ENCODE measurements at regions of chr3 and their contacts with region 1.

Region 1: GRCh38 chr3:141875374-141875892 is 1.0 kb upstream of the ATP1B3 start:
- DNase-seq: peak; percentile 87 to 89
- ATAC-seq: peak; percentile 83 to 97 (median 94)
- H3K4me3 ChIP-seq: peak overlapping the region; percentile 68 to 98 (median 94)
- H3K27ac ChIP-seq: peak overlapping the region; percentile 90 to 100 (median 99)
- H3K4me1 ChIP-seq: peaks cover 0 to 40% (median 21%) of the 10 kb centered on the region in 9 donors
- H3K27me3 ChIP-seq: no peaks in the 10 kb centered on the region
- CTCF ChIP-seq: peak; percentile 66 to 97 (median 90)

Region 2: GRCh38 chr3:141575879-141576743 is 299.3 kb before region 1 on chr3:
- intact Hi-C with region 1: loop called in 2 of 10 experiments (anchors 10 kb)
- DNase-seq: no peak
- ATAC-seq: peak in 4 of 8 donors; percentile 57 to 64 (median 60)
- H3K4me3 ChIP-seq: no peak overlapping the region
- H3K27ac ChIP-seq: peak overlapping the region in 1 of 10 donors; percentile 10
- H3K4me1 ChIP-seq: peaks cover 0 to 6% (median 0%) of the 10 kb centered on the region in 9 donors
- H3K27me3 ChIP-seq: no peaks in the 10 kb centered on the region
- CTCF ChIP-seq: peak in 8 of 9 donors; percentile 23 to 73 (median 60)

Region 3: GRCh38 chr3:141719911-141720310 is 155.5 kb before region 1 on chr3:
- intact Hi-C with region 1: no loop called
- DNase-seq: no peak
- ATAC-seq: no peak
- H3K4me3 ChIP-seq: no peak overlapping the region
- H3K27ac ChIP-seq: no peak overlapping the region
- H3K4me1 ChIP-seq: peaks cover 0 to 6% (median 0%) of the 10 kb centered on the region in 9 donors
- H3K27me3 ChIP-seq: no peaks in the 10 kb centered on the region
- CTCF ChIP-seq: no peak

Region 4: DNA sequence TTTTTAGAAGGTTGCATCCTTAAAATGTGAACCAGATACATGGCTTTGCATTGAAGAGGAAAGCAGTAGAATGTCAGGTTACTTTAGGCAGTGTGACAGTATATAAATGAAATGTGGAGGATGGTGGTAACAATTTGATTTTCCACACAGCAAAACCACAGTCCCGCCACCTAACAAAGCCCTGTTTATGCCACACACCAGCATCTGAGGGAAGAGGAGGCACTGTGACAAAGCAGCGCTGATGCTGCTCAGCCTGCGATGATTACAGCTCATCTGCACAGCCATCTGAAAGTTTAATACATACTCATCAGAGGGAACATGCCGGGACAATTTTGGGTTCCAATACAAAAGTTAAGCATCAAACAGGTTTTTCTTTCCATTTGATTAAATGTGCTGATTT is 128.5 kb before region 1 on chr3:
- intact Hi-C with region 1: loop called in 2 of 10 experiments (anchors 10 kb)
- DNase-seq: no peak
- ATAC-seq: no peak
- H3K4me3 ChIP-seq: no peak overlapping the region
- H3K27ac ChIP-seq: no peak overlapping the region
- H3K4me1 ChIP-seq: peaks cover 0 to 28% (median 22%) of the 10 kb centered on the region in 9 donors
- H3K27me3 ChIP-seq: no peaks in the 10 kb centered on the region
- CTCF ChIP-seq: no peak

Region 5: GRCh38 chr3:141796081-141796888 is 79.1 kb before region 1 on chr3:
- intact Hi-C with region 1: loop called in 5 of 10 experiments (anchors 2 to 10 kb)
- DNase-seq: peak in 1 of 2 donors; percentile 34
- ATAC-seq: peak in 6 of 8 donors; percentile 2 to 72 (median 20)
- H3K4me3 ChIP-seq: peak overlapping the region in 5 of 10 donors; percentile 45 to 60 (median 56)
- H3K27ac ChIP-seq: peak overlapping the region in 9 of 10 donors; percentile 69 to 97 (median 85)
- H3K4me1 ChIP-seq: peaks cover 8 to 39% (median 28%) of the 10 kb centered on the region in 9 donors
- H3K27me3 ChIP-seq: no peaks in the 10 kb centered on the region
- CTCF ChIP-seq: no peak

Measured in heart right ventricle (tissue), 16 donors.